ENCODE measurements at regions of chr16 and their contacts with region 1.

Region 1: DNA sequence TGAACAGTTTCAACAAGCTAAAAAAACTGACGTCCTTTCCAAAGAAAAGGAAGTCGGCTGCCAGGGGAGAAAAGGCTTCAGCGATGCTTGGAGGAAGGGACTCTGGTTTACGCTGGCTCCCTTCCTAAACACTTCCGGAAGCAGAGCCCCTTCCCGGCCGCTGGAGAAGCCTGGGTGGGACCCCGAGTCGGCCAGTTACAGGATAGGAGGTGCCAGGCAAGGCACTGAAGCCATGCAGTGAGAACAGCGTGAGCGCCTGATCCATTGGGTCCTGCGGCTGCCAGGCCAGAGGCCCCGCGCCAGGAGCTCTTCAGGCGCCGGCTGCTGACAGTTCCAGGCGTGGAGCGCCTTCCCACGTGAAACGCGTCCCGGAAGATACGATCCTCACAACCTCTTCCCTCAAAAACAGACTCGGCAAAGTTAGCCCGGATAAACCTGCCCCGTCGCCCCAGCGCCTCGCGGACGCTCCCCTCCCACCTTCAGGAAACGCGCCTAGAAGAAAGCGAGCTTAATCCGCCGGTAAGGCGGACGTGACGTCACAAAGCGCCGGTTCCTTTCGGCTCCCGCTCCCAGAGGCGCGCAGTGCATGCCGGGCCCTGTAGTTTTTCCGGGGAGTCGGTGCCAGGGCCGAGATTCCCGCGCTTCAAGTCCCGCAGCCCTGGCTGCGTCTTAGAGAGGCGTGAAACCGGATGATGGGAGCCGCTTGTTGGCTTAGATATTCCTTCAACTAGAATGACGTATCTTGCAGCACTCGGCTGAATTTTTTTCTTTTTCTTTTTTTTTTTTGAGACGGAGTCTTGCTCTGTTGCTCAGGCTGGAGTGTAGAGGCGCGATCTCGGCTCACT is at the start of gene ADAT1:
- DNase-seq: peak; percentile 97 to 99 (median 97)
- H3K4me3 ChIP-seq: peak within 1 kb of the TSS; percentile 70 to 95 (median 93)
- H3K4me3 Mint-ChIP-seq: peak within 1 kb of the TSS; percentile 98 to 99
- H3K27ac ChIP-seq: peak within 1 kb of the TSS; percentile 92 to 93
- H3K27ac Mint-ChIP-seq: peak within 1 kb of the TSS; percentile 95 to 99 (median 97)
- H3K4me1 ChIP-seq: peaks cover 12 to 24% of the 10 kb centered on the region in 2 donors
- H3K4me1 Mint-ChIP-seq: peaks cover 29% of the 10 kb centered on the region
- H3K27me3 ChIP-seq: no peaks in the 10 kb centered on the region
- H3K27me3 Mint-ChIP-seq: no peaks in the 10 kb centered on the region
- CTCF ChIP-seq: no peak
- polyA plus RNA-seq, gene ADAT1: 16.8 to 18.9 (median 17.8) TPM

Region 2: DNA sequence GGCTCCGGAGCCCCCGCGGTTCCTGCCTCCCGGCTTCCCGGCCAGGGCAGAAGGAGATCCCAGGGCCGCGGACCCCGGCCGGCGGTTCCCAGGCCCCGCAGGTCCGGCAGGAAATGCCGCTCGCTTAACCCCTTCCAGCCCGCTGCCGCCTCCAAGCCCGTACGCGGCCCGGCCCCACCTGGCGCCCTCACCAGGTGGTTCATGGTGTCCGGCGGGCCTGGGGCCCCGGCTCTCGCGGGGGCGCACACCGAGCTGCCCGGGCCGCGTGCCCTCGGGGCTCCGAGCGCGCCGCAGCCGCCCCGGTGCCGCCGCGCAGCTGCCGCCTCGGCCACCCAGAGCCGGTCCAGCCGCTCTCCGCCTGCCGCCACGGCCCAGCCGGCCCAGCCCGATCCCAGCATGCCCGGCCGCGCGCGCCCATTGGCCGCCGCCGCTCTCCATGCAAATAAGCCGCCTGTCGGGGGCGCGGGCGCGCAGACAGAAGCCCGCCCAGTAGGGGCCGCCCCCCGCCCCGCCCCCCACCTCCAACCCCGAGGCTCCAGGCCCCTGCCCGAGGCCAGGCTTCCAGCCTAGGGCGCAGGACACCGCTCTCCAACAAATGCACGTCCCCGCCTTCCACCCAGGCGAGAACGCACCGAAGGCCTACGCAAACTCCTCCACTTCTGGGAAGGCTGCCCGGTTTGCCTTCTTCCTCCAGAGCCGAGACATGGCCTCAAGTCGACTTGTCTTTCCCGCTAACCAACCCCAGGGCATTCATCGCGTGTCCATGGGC is 371.5 kb before region 1 on chr16 and contains the start of gene BCAR1:
- intact Hi-C with region 1: no loop called
- DNase-seq: no peak
- H3K4me3 ChIP-seq: no peak within 1 kb of the TSS
- H3K4me3 Mint-ChIP-seq: peak within 1 kb of the TSS in 1 of 2 donors; percentile 80
- H3K27ac ChIP-seq: no peak within 1 kb of the TSS
- H3K27ac Mint-ChIP-seq: no peak within 1 kb of the TSS
- H3K4me1 ChIP-seq: no peaks in the 10 kb centered on the region
- H3K4me1 Mint-ChIP-seq: peaks cover 2% of the 10 kb centered on the region
- H3K27me3 ChIP-seq: peaks cover 11 to 91% of the 10 kb centered on the region in 2 donors
- H3K27me3 Mint-ChIP-seq: peaks cover 87 to 99% (median 92%) of the 10 kb centered on the region in 3 donors
- CTCF ChIP-seq: no peak
- polyA plus RNA-seq, gene BCAR1: not detected

Region 3: DNA sequence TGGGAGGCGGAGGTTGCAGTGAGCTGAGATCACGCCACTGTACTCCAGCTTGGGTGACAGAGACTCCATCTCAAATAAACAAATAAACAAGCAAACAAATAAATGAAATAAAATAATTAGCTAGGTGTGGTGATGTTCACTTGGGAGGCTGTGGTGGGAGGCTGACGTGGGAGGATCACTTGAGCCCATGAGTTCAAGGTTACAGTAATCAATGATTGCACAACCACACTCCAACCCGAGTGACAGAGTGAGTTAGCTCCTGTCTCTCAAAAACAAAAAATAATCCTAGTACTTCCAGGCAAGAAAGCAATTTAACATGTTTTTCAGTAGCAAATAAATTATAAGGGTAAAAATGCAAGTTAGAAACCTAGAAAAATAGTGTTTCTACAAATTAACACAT is 216.0 kb before region 1 on chr16:
- intact Hi-C with region 1: no loop called
- DNase-seq: no peak
- H3K4me3 ChIP-seq: no peak overlapping the region
- H3K4me3 Mint-ChIP-seq: no peak overlapping the region
- H3K27ac ChIP-seq: no peak overlapping the region
- H3K27ac Mint-ChIP-seq: no peak overlapping the region
- H3K4me1 ChIP-seq: no peaks in the 10 kb centered on the region
- H3K4me1 Mint-ChIP-seq: peaks cover 5% of the 10 kb centered on the region
- H3K27me3 ChIP-seq: no peaks in the 10 kb centered on the region
- H3K27me3 Mint-ChIP-seq: no peaks in the 10 kb centered on the region
- CTCF ChIP-seq: no peak

Region 4: GRCh38 chr16:75432828-75433731 is 189.9 kb before region 1 on chr16 and contains the start of gene CFDP1:
- intact Hi-C with region 1: loop called (anchors 5 to 10 kb)
- DNase-seq: peak; percentile 93 to 95 (median 94)
- H3K4me3 ChIP-seq: peak within 1 kb of the TSS; percentile 74 to 91 (median 83)
- H3K4me3 Mint-ChIP-seq: peak within 1 kb of the TSS; percentile 76 to 99
- H3K27ac ChIP-seq: peak within 1 kb of the TSS; percentile 96 to 99
- H3K27ac Mint-ChIP-seq: peak within 1 kb of the TSS; percentile 95 to 100 (median 99)
- H3K4me1 ChIP-seq: peaks cover 16 to 26% of the 10 kb centered on the region in 2 donors
- H3K4me1 Mint-ChIP-seq: peaks cover 30% of the 10 kb centered on the region
- H3K27me3 ChIP-seq: no peaks in the 10 kb centered on the region
- H3K27me3 Mint-ChIP-seq: peaks cover 0 to 10% (median 3%) of the 10 kb centered on the region in 3 donors
- CTCF ChIP-seq: no peak
- polyA plus RNA-seq, gene CFDP1: 12.9 to 23.2 (median 19.0) TPM

Region 5: GRCh38 chr16:75464130-75464918 is 158.7 kb before region 1 on chr16 and contains the start of gene TMEM170A:
- intact Hi-C with region 1: loop called (anchors 10 kb)
- DNase-seq: peak; percentile 99 to 100 (median 99)
- H3K4me3 ChIP-seq: peak within 1 kb of the TSS; percentile 65 to 87 (median 78)
- H3K4me3 Mint-ChIP-seq: peak within 1 kb of the TSS; percentile 95 to 96
- H3K27ac ChIP-seq: peak within 1 kb of the TSS; percentile 88 to 94
- H3K27ac Mint-ChIP-seq: peak within 1 kb of the TSS; percentile 89 to 97 (median 96)
- H3K4me1 ChIP-seq: peaks cover 25 to 34% of the 10 kb centered on the region in 2 donors
- H3K4me1 Mint-ChIP-seq: peaks cover 29% of the 10 kb centered on the region
- H3K27me3 ChIP-seq: no peaks in the 10 kb centered on the region
- H3K27me3 Mint-ChIP-seq: peaks cover 0 to 3% (median 2%) of the 10 kb centered on the region in 3 donors
- CTCF ChIP-seq: peak; percentile 100
- polyA plus RNA-seq, gene TMEM170A: 17.9 to 31.6 (median 25.4) TPM

Region 6: DNA sequence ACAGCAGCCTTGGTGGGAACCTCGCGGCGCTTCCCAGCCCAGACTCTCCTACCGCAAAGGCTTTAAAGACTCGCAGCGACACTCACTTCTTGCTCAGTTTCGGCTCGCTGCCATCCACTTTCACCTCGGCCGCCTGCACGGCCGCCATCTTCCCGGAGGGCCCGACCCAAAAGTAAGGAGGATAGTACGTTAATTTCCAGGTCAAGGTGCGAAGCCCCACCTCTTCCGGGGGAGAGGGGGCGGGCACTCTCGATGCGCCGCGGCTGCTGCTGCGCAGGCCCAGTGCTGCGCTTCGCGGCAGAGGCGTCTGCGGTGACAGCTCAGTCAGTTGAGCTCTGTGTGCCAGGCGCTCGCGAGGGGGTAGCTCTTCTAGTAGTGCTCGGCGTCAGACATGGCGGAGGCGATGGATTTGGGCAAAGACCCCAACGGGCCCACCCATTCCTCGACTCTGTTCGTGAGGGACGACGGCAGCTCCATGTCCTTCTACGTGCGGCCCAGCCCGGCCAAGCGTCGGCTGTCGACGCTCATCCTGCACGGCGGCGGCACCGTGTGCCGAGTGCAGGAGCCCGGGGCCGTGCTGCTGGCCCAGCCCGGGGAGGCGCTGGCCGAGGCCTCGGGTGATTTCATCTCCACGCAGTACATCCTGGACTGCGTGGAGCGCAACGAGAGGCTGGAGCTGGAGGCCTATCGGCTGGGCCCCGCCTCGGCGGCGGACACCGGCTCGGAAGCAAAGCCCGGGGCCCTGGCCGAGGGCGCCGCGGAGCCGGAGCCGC is 24.7 kb after region 1 on chr16 and contains the starts of genes KARS1 and TERF2IP:
- intact Hi-C with region 1: loop called (anchors 1 to 2 kb)
- DNase-seq: peak; percentile 91
- H3K4me3 ChIP-seq: peak within 1 kb of the TSS; percentile 90 to 95 (median 92)
- H3K4me3 Mint-ChIP-seq: peak within 1 kb of the TSS; percentile 96 to 97
- H3K27ac ChIP-seq: peak within 1 kb of the TSS; percentile 89 to 97
- H3K27ac Mint-ChIP-seq: peak within 1 kb of the TSS; percentile 93 to 98 (median 96)
- H3K4me1 ChIP-seq: peaks cover 34 to 45% of the 10 kb centered on the region in 2 donors
- H3K4me1 Mint-ChIP-seq: peaks cover 40% of the 10 kb centered on the region
- H3K27me3 ChIP-seq: no peaks in the 10 kb centered on the region
- H3K27me3 Mint-ChIP-seq: no peaks in the 10 kb centered on the region
- CTCF ChIP-seq: no peak
- polyA plus RNA-seq, gene KARS1: 66.1 to 150 (median 116) TPM
- polyA plus RNA-seq, gene TERF2IP: 39.7 to 64.1 (median 47.9) TPM